ENCODE measurements at regions of chr10 and their contacts with region 1.

Region 1: GRCh38 chr10:101353692-101354327 is at the start of gene BTRC:
- DNase-seq: peak; percentile 76 to 99 (median 98)
- ATAC-seq: peak; percentile 96
- H3K4me3 ChIP-seq: peak within 1 kb of the TSS; percentile 69
- H3K4me3 Mint-ChIP-seq: peak within 1 kb of the TSS; percentile 93 to 99 (median 98)
- H3K27ac ChIP-seq: peak within 1 kb of the TSS; percentile 94
- H3K27ac Mint-ChIP-seq: peak within 1 kb of the TSS; percentile 94 to 99 (median 98)
- H3K4me1 ChIP-seq: peaks cover 5 to 8% of the 10 kb centered on the region in 2 donors
- H3K4me1 Mint-ChIP-seq: peaks cover 15 to 41% (median 33%) of the 10 kb centered on the region in 7 donors
- H3K27me3 ChIP-seq: no peaks in the 10 kb centered on the region
- H3K27me3 Mint-ChIP-seq: peaks cover 5 to 19% (median 14%) of the 10 kb centered on the region in 5 donors
- total RNA-seq, gene BTRC: 14.7 to 26.1 (median 17.6) TPM

Region 2: DNA sequence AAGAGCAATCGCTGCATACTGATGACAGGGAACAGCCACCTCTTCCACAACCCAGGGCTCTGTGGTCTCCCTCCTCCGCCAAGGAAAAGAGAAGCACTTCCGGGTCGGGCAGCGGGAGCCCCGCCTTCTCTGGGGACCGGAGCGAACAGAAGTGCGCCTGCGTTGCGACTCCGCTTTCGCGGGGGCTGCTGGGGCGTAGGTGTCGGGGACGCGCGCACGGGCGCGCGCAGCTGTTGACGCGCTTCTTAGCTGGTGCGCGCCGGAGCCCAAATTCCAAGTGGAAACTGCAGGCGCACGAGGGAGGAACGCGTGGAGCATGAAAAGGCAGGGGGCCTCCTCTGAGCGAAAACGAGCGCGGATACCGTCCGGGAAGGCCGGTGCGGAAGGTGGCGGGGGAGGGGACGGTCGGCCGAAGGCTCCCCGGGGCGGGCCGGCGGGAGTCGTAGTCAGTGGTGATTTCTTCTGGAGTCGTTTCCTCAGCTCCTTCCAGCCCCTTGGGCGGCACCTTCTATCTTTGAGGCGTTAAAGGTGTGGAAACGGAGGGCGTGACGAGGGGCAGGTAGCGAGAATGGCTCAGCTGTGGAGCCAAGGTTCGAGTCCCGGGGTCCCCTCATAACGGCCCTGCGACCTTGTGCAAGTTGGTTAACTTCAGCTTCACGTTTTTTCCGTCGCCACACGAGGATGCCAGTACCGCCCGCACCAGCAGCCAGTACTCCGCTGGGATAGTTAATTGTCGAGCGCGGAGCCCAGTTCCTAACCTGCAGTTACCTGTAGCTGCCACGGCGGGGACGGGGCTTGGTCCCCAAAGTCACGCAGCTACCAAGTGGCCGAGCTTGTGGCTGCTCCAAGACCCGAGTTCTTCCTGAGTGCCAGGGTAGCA is 1621.5 kb before region 1 on chr10 and contains the starts of genes COX15 and CUTC:
- CTCF ChIA-PET with region 1: no interaction called
- POLR2A ChIA-PET with region 1: no interaction called
- intact Hi-C with region 1: loop called in 1 of 2 experiments (anchors 10 kb)
- DNase-seq: peak; percentile 89 to 95 (median 94)
- ATAC-seq: peak; percentile 95
- H3K4me3 ChIP-seq: peak within 1 kb of the TSS; percentile 94
- H3K4me3 Mint-ChIP-seq: peak within 1 kb of the TSS; percentile 95 to 100 (median 98)
- H3K27ac ChIP-seq: peak within 1 kb of the TSS; percentile 83
- H3K27ac Mint-ChIP-seq: peak within 1 kb of the TSS; percentile 98 to 100 (median 99)
- H3K4me1 ChIP-seq: peaks cover 11 to 19% of the 10 kb centered on the region in 2 donors
- H3K4me1 Mint-ChIP-seq: peaks cover 28 to 79% (median 52%) of the 10 kb centered on the region in 7 donors
- H3K27me3 ChIP-seq: no peaks in the 10 kb centered on the region
- H3K27me3 Mint-ChIP-seq: no peaks in the 10 kb centered on the region
- total RNA-seq, gene COX15: 17.6 to 43.5 (median 32.9) TPM
- total RNA-seq, gene CUTC: 19.3 to 37.1 (median 25.0) TPM

Region 3: GRCh38 chr10:100998991-100999741 is 354.6 kb before region 1 on chr10:
- CTCF ChIA-PET with region 1: no interaction called
- POLR2A ChIA-PET with region 1: no interaction called
- intact Hi-C with region 1: loop called in 1 of 2 experiments (anchors 5 kb)
- DNase-seq: peak; percentile 69 to 90 (median 82)
- ATAC-seq: peak; percentile 82
- H3K4me3 ChIP-seq: peak overlapping the region; percentile 87
- H3K4me3 Mint-ChIP-seq: peak overlapping the region; percentile 87 to 98 (median 92)
- H3K27ac ChIP-seq: peak overlapping the region; percentile 99
- H3K27ac Mint-ChIP-seq: peak overlapping the region; percentile 88 to 99 (median 94)
- H3K4me1 ChIP-seq: peaks cover 20 to 22% of the 10 kb centered on the region in 2 donors
- H3K4me1 Mint-ChIP-seq: peaks cover 15 to 37% (median 23%) of the 10 kb centered on the region in 7 donors
- H3K27me3 ChIP-seq: no peaks in the 10 kb centered on the region
- H3K27me3 Mint-ChIP-seq: no peaks in the 10 kb centered on the region

Region 4: GRCh38 chr10:101228153-101228973 is 125.4 kb before region 1 on chr10:
- CTCF ChIA-PET with region 1: no interaction called
- POLR2A ChIA-PET with region 1: no interaction called
- intact Hi-C with region 1: loop called in 1 of 2 experiments (anchors 5 kb)
- DNase-seq: no peak
- ATAC-seq: no peak
- H3K4me3 ChIP-seq: no peak overlapping the region
- H3K4me3 Mint-ChIP-seq: peak overlapping the region; percentile 42 to 80 (median 74)
- H3K27ac ChIP-seq: no peak overlapping the region
- H3K27ac Mint-ChIP-seq: peak overlapping the region in 1 of 9 donors; percentile 79
- H3K4me1 ChIP-seq: peaks cover 27 to 48% of the 10 kb centered on the region in 2 donors
- H3K4me1 Mint-ChIP-seq: peaks cover 26 to 52% (median 40%) of the 10 kb centered on the region in 7 donors
- H3K27me3 ChIP-seq: peaks cover 18 to 54% of the 10 kb centered on the region in 2 donors
- H3K27me3 Mint-ChIP-seq: peaks cover 71 to 78% (median 74%) of the 10 kb centered on the region in 5 donors

Region 5: GRCh38 chr10:101587725-101588653 is 234.2 kb after region 1 on chr10 and contains the starts of genes DPCD and POLL:
- CTCF ChIA-PET with region 1: no interaction called
- POLR2A ChIA-PET with region 1: no interaction called
- intact Hi-C with region 1: loop called (anchors 1 kb)
- DNase-seq: peak; percentile 73 to 89 (median 81)
- ATAC-seq: peak; percentile 94
- H3K4me3 ChIP-seq: peak within 1 kb of the TSS; percentile 77
- H3K4me3 Mint-ChIP-seq: peak within 1 kb of the TSS; percentile 92 to 97 (median 95)
- H3K27ac ChIP-seq: peak within 1 kb of the TSS; percentile 69
- H3K27ac Mint-ChIP-seq: peak within 1 kb of the TSS; percentile 71 to 94 (median 89)
- H3K4me1 ChIP-seq: peaks cover 14 to 16% of the 10 kb centered on the region in 2 donors
- H3K4me1 Mint-ChIP-seq: peaks cover 16 to 37% (median 32%) of the 10 kb centered on the region in 7 donors
- H3K27me3 ChIP-seq: no peaks in the 10 kb centered on the region
- H3K27me3 Mint-ChIP-seq: no peaks in the 10 kb centered on the region
- total RNA-seq, gene DPCD: 0.64 to 3.6 (median 1.3) TPM
- total RNA-seq, gene POLL: 34.9 to 65.8 (median 38.8) TPM

Region 6: GRCh38 chr10:101830322-101831168 is 476.7 kb after region 1 on chr10:
- CTCF ChIA-PET with region 1: no interaction called
- POLR2A ChIA-PET with region 1: no interaction called
- intact Hi-C with region 1: loop called (anchors 2 to 5 kb)
- DNase-seq: peak; percentile 89 to 98 (median 95)
- ATAC-seq: peak; percentile 90
- H3K4me3 ChIP-seq: peak overlapping the region; percentile 66
- H3K4me3 Mint-ChIP-seq: peak overlapping the region; percentile 79 to 94 (median 88)
- H3K27ac ChIP-seq: peak overlapping the region; percentile 85
- H3K27ac Mint-ChIP-seq: peak overlapping the region; percentile 94 to 100 (median 99)
- H3K4me1 ChIP-seq: peaks cover 22 to 53% of the 10 kb centered on the region in 2 donors
- H3K4me1 Mint-ChIP-seq: peaks cover 41 to 59% (median 53%) of the 10 kb centered on the region in 7 donors
- H3K27me3 ChIP-seq: no peaks in the 10 kb centered on the region
- H3K27me3 Mint-ChIP-seq: peaks cover 0 to 4% (median 0%) of the 10 kb centered on the region in 5 donors

Region 7: GRCh38 chr10:102743588-102744373 is 1390.0 kb after region 1 on chr10 and contains the start of gene WBP1L:
- CTCF ChIA-PET with region 1: no interaction called
- POLR2A ChIA-PET with region 1: no interaction called
- intact Hi-C with region 1: loop called in 1 of 2 experiments (anchors 10 kb)
- DNase-seq: peak; percentile 77 to 98 (median 96)
- ATAC-seq: peak; percentile 98
- H3K4me3 ChIP-seq: peak within 1 kb of the TSS; percentile 85
- H3K4me3 Mint-ChIP-seq: peak within 1 kb of the TSS; percentile 80 to 97 (median 93)
- H3K27ac ChIP-seq: peak within 1 kb of the TSS; percentile 77
- H3K27ac Mint-ChIP-seq: peak within 1 kb of the TSS; percentile 57 to 96 (median 90)
- H3K4me1 ChIP-seq: peaks cover 17 to 25% of the 10 kb centered on the region in 2 donors
- H3K4me1 Mint-ChIP-seq: peaks cover 33 to 59% (median 48%) of the 10 kb centered on the region in 7 donors
- H3K27me3 ChIP-seq: no peaks in the 10 kb centered on the region
- H3K27me3 Mint-ChIP-seq: no peaks in the 10 kb centered on the region
- total RNA-seq, gene WBP1L: 20.5 to 37.9 (median 34.1) TPM